Naive thymus-derived CD4-positive, alpha-beta T cell (primary cell): ENCODE measurements at regions of chr11 and their contacts with region 1.

Region 1: GRCh38 chr11:113773416-113774173 is at the start of gene ZW10:
- DNase-seq: peak; percentile 86 to 92 (median 91)
- ATAC-seq: peak; percentile 99
- H3K4me3 ChIP-seq: peak within 1 kb of the TSS; percentile 86
- H3K4me3 Mint-ChIP-seq: peak within 1 kb of the TSS; percentile 92 to 100 (median 98)
- H3K27ac ChIP-seq: peak within 1 kb of the TSS; percentile 81
- H3K27ac Mint-ChIP-seq: peak within 1 kb of the TSS; percentile 89 to 97 (median 95)
- H3K4me1 ChIP-seq: peaks cover 0 to 4% of the 10 kb centered on the region in 2 donors
- H3K4me1 Mint-ChIP-seq: peaks cover 19 to 39% (median 30%) of the 10 kb centered on the region in 7 donors
- H3K27me3 ChIP-seq: no peaks in the 10 kb centered on the region
- H3K27me3 Mint-ChIP-seq: peaks cover 0 to 10% (median 0%) of the 10 kb centered on the region in 5 donors
- total RNA-seq, gene ZW10: 5.0 to 19.0 (median 10.2) TPM

Region 2: GRCh38 chr11:112086422-112087191 is 1687.0 kb before region 1 on chr11 and contains the starts of genes SDHD and TIMM8B:
- CTCF ChIA-PET with region 1: no interaction called
- POLR2A ChIA-PET with region 1: no interaction called
- intact Hi-C with region 1: loop called in 1 of 2 experiments (anchors 5 kb)
- DNase-seq: peak; percentile 90 to 98 (median 97)
- ATAC-seq: peak; percentile 94
- H3K4me3 ChIP-seq: peak within 1 kb of the TSS; percentile 99
- H3K4me3 Mint-ChIP-seq: peak within 1 kb of the TSS; percentile 90 to 100 (median 98)
- H3K27ac ChIP-seq: peak within 1 kb of the TSS; percentile 76
- H3K27ac Mint-ChIP-seq: peak within 1 kb of the TSS; percentile 92 to 99 (median 96)
- H3K4me1 ChIP-seq: peaks cover 21 to 23% of the 10 kb centered on the region in 2 donors
- H3K4me1 Mint-ChIP-seq: peaks cover 44 to 69% (median 62%) of the 10 kb centered on the region in 7 donors
- H3K27me3 ChIP-seq: no peaks in the 10 kb centered on the region
- H3K27me3 Mint-ChIP-seq: peaks cover 0 to 2% (median 0%) of the 10 kb centered on the region in 5 donors
- total RNA-seq, gene SDHD: 39.6 to 84.4 (median 65.8) TPM
- total RNA-seq, gene TIMM8B: 15.5 to 61.1 (median 24.3) TPM

Region 3: DNA sequence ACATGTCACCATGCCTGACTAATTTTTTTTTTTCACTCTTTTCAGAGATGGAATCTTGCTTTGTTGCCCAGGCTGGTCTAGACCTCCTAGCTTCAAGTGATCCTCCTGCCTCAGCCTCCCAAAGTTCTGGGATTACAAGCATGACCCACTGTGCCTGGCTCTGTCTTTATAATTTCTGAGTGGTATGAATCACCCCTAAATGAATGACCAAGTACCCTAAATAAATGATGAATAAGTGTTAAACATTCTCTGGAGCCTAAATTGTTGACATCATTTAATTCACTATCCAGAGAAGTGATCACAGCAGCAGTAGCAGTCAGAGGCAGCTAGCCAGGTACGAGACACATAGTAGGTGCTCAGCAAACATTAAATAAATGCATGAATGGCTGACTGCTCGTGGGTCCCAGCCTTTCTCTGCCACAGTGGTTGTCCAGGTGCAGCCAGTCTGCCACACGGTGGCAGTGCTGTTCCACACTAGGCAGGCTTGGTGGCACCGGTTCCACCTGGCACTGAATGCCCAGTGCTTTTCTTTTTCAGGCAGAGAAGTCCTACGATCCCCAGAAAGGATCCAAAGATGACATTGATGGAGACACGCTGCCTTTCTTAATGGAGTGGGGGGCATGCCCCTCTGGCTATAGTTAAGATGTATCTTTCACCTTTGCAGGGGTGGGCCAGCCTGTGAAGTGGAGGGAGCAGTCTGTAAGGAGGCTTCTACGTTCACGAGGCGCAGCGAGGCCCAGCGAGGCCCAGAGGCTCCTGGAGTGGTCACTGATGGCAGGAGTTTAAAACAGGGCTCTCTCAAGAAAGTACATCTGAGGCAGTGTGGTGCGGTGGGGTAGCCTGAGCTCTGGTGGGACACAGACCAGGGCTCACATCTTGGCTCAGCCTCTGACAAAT is 467.9 kb before region 1 on chr11:
- CTCF ChIA-PET with region 1: interaction called, 3 read pairs
- POLR2A ChIA-PET with region 1: no interaction called
- intact Hi-C with region 1: loop called (anchors 1 to 2 kb)
- DNase-seq: peak; percentile 32 to 68 (median 61)
- ATAC-seq: peak; percentile 95
- H3K4me3 ChIP-seq: no peak overlapping the region
- H3K4me3 Mint-ChIP-seq: no peak overlapping the region
- H3K27ac ChIP-seq: no peak overlapping the region
- H3K27ac Mint-ChIP-seq: no peak overlapping the region
- H3K4me1 ChIP-seq: no peaks in the 10 kb centered on the region
- H3K4me1 Mint-ChIP-seq: peaks cover 0 to 8% (median 3%) of the 10 kb centered on the region in 7 donors
- H3K27me3 ChIP-seq: no peaks in the 10 kb centered on the region
- H3K27me3 Mint-ChIP-seq: peaks cover 0 to 25% (median 11%) of the 10 kb centered on the region in 5 donors

Region 4: GRCh38 chr11:113839842-113840241 is 66.2 kb after region 1 on chr11:
- CTCF ChIA-PET with region 1: no interaction called
- POLR2A ChIA-PET with region 1: no interaction called
- intact Hi-C with region 1: no loop called
- DNase-seq: no peak
- ATAC-seq: peak; percentile 22
- H3K4me3 ChIP-seq: no peak overlapping the region
- H3K4me3 Mint-ChIP-seq: no peak overlapping the region
- H3K27ac ChIP-seq: no peak overlapping the region
- H3K27ac Mint-ChIP-seq: no peak overlapping the region
- H3K4me1 ChIP-seq: no peaks in the 10 kb centered on the region
- H3K4me1 Mint-ChIP-seq: peaks cover 0 to 12% (median 4%) of the 10 kb centered on the region in 7 donors
- H3K27me3 ChIP-seq: no peaks in the 10 kb centered on the region
- H3K27me3 Mint-ChIP-seq: no peaks in the 10 kb centered on the region

Region 5: GRCh38 chr11:113875234-113876073 is 101.9 kb after region 1 on chr11 and contains the start of gene USP28:
- CTCF ChIA-PET with region 1: no interaction called
- POLR2A ChIA-PET with region 1: no interaction called
- intact Hi-C with region 1: loop called (anchors 1 kb)
- DNase-seq: peak; percentile 49 to 92 (median 73)
- ATAC-seq: peak; percentile 97
- H3K4me3 ChIP-seq: peak within 1 kb of the TSS; percentile 79
- H3K4me3 Mint-ChIP-seq: peak within 1 kb of the TSS; percentile 88 to 100 (median 98)
- H3K27ac ChIP-seq: peak within 1 kb of the TSS; percentile 78
- H3K27ac Mint-ChIP-seq: peak within 1 kb of the TSS; percentile 91 to 99 (median 98)
- H3K4me1 ChIP-seq: no peaks in the 10 kb centered on the region
- H3K4me1 Mint-ChIP-seq: peaks cover 34 to 59% (median 54%) of the 10 kb centered on the region in 7 donors
- H3K27me3 ChIP-seq: no peaks in the 10 kb centered on the region
- H3K27me3 Mint-ChIP-seq: no peaks in the 10 kb centered on the region
- total RNA-seq, gene USP28: 12.0 to 50.3 (median 19.0) TPM

Region 6: GRCh38 chr11:114439229-114440120 is 665.9 kb after region 1 on chr11 and contains the start of gene REXO2:
- CTCF ChIA-PET with region 1: no interaction called
- POLR2A ChIA-PET with region 1: no interaction called
- intact Hi-C with region 1: loop called in 1 of 2 experiments (anchors 1 kb)
- DNase-seq: peak; percentile 89 to 94 (median 92)
- ATAC-seq: peak; percentile 100
- H3K4me3 ChIP-seq: peak within 1 kb of the TSS; percentile 96
- H3K4me3 Mint-ChIP-seq: peak within 1 kb of the TSS; percentile 92 to 98 (median 96)
- H3K27ac ChIP-seq: peak within 1 kb of the TSS; percentile 79
- H3K27ac Mint-ChIP-seq: peak within 1 kb of the TSS; percentile 84 to 95 (median 93)
- H3K4me1 ChIP-seq: peaks cover 18 to 20% of the 10 kb centered on the region in 2 donors
- H3K4me1 Mint-ChIP-seq: peaks cover 22 to 56% (median 36%) of the 10 kb centered on the region in 7 donors
- H3K27me3 ChIP-seq: no peaks in the 10 kb centered on the region
- H3K27me3 Mint-ChIP-seq: peaks cover 0 to 4% (median 0%) of the 10 kb centered on the region in 5 donors
- total RNA-seq, gene REXO2: 33.8 to 105 (median 56.0) TPM